ENCODE measurements at regions of chr2 and their contacts with region 1.

Region 1: DNA sequence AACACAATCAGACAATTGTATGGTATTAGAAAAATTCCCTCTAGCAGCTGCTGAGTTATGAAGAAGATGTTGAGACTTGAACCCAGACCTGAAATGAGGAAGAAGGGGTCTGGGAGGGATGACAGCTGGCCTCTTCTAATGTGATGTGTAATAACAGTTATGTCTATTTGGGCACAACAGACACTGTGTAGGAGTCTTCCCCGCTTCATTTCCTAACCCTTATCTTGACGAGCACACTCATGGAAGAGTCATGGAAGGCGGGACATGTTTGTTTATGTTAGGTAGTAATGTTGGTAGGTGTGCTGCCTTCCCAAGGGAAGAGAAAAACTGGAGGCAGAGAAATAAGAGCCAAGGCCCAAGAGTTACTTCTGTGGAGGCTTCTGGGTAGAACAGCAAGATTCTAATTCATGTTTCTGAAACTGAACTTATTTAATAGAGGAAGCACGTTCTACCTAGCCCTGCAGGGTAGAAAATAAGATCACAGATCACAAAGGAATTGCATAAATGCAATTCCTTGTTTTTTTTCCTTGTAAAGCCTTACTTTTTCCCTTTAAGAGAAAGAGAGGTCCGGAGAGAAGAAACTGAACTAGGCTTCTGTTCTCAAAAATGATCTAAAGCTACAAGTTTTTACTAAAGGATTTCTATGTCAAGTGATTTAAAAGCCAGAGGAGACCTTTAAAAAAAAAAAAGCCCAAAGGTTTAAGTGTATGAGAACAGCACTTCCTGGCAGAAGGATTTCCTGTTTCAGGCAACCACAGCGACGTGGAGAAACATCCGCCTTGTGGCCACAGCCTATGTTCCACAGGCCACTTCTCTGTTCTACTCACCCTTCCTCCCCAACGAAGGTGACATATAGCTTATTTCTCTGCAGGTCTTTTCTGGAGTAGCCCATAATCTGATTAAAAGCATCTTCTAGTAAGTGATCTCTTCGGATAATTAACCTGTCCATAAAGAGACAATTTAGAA is 68.5 kb upstream of the STK17B start:
- DNase-seq: peak; percentile 95
- H3K4me3 Mint-ChIP-seq: peak overlapping the region; percentile 68
- H3K27ac Mint-ChIP-seq: peak overlapping the region; percentile 99
- H3K4me1 Mint-ChIP-seq: peaks cover 72% of the 10 kb centered on the region
- H3K27me3 Mint-ChIP-seq: no peaks in the 10 kb centered on the region

Region 2: DNA sequence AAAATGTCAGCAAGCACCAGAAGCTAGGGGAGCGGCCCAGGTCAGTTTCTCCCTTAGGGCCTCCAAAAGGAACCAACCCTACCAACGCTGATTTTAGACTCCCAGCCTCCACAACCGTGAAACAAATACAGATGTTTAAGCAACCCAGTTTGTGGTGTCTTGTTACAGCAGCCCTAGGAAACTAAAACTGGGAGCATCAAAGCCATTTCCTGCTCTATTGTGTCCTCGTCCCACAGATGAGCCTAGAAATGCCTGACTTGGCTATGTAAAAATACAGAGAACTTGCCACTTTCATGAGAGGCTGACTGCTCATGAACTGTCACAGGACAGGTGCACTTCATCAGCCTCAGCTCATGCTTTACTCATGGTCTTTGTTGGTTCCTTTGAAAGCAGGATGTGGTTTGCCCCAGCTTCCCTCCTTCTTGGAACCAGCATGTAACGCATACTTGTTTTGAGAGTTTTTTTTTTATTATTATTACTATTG is 680.4 kb before region 1 on chr2:
- intact Hi-C with region 1: loop called (anchors 2 kb)
- DNase-seq: peak; percentile 95
- H3K4me3 Mint-ChIP-seq: peak overlapping the region; percentile 81
- H3K27ac Mint-ChIP-seq: peak overlapping the region; percentile 97
- H3K4me1 Mint-ChIP-seq: peaks cover 51% of the 10 kb centered on the region
- H3K27me3 Mint-ChIP-seq: no peaks in the 10 kb centered on the region

Region 3: DNA sequence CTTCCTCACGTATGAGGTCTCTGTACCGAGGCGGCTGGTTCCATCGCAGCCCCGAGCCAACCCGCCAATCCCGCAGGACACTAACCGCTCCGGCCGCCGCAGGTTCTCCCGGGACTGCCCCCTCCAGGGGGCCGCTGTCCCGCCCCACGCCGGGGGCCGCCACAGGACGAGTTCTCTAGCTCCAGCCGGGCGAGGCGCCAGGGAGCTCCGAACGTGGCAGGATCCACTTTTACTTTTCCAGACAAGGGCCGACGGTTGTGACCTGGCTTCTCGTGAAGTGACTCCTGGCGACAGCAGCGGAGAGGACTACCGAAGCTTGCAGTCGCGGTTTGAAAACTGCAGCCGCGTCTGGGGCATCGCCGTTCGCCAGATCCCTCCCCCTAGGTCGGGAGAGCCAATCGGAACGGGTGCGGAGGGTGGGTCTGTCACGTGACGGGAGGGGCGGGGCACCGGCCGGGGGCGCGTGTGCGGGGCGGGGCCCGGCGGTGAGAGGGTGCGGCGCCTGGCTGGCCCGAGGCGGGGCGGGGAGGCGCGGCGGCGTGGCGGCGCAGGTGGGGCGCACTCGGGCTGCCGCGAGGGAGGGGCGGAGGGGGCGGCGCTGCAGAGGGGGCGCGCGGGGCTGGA is 68.5 kb before region 1 on chr2 and contains the start of gene STK17B:
- intact Hi-C with region 1: loop called (anchors 1 kb)
- DNase-seq: peak; percentile 98
- H3K4me3 Mint-ChIP-seq: peak within 1 kb of the TSS; percentile 93
- H3K27ac Mint-ChIP-seq: peak within 1 kb of the TSS; percentile 99
- H3K4me1 Mint-ChIP-seq: peaks cover 40% of the 10 kb centered on the region
- H3K27me3 Mint-ChIP-seq: no peaks in the 10 kb centered on the region
- total RNA-seq, gene STK17B: 129 and 131 TPM in 2 replicates

Region 4: DNA sequence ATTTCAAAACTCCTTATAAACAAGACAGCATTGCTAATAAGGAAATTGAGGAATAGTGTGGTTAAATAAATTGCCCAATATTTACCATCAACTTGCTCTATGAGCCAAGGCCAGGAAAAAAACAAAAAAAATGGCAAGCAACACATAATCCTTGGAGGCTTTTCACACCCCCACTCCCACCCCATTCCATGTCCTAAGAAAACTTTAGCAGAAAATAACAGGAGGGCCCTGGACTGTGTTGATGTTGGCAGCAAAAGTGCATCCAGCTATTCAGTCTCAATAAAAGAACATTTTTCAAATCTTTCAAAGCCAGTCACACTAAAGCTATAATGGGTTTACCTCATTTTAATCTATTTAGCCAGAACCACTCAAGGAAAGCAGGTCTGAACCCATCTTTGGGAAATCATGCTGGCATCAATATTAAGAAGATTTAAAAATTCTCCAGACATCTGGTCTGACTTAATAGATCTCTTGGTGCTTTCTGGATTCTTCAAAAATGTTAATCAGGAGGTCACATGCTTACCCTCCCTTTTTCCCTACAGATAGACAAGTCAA is 33.9 kb before region 1 on chr2:
- intact Hi-C with region 1: loop called (anchors 1 kb)
- DNase-seq: no peak
- H3K4me3 Mint-ChIP-seq: no peak overlapping the region
- H3K27ac Mint-ChIP-seq: no peak overlapping the region
- H3K4me1 Mint-ChIP-seq: peaks cover 36% of the 10 kb centered on the region
- H3K27me3 Mint-ChIP-seq: no peaks in the 10 kb centered on the region

Region 5: DNA sequence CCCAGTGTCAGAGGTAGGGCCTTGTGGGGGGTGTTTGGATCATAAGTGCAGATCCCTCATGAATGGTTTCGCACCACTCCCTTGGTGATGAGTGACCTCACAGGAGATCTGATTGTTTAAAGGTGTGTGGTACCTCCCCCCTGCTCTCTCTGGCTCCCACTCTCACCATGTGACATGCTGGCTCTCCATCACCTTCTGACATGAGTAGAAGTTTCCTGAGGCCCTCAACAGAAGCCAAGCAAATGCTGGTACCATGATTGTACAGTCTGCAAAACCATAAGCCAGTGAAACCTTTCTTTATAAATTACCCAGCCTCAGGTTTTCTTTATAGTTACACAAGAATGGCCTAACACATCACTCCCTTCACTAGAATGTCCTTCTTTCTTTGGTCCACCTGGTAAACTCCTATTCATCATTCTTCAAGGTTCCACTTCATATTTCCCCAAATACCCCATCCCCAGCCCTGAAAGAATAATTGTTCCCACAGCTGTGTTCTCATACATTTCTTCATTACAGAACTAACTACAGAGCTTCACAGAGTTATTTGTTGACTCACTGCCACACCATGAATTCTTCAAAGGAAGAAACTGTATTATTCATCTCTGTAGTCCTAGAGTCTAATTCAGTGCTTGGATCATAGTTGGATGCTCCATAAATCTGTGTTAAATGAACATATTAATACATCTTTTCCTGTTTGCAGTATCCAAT is 12.7 kb after region 1 on chr2:
- intact Hi-C with region 1: loop called (anchors 1 kb)
- DNase-seq: no peak
- H3K4me3 Mint-ChIP-seq: peak overlapping the region; percentile 2
- H3K27ac Mint-ChIP-seq: peak overlapping the region; percentile 79
- H3K4me1 Mint-ChIP-seq: peaks cover 72% of the 10 kb centered on the region
- H3K27me3 Mint-ChIP-seq: no peaks in the 10 kb centered on the region

Region 6: GRCh38 chr2:196277002-196277401 is 37.1 kb after region 1 on chr2:
- intact Hi-C with region 1: loop called (anchors 1 kb)
- DNase-seq: peak; percentile 80
- H3K4me3 Mint-ChIP-seq: no peak overlapping the region
- H3K27ac Mint-ChIP-seq: no peak overlapping the region
- H3K4me1 Mint-ChIP-seq: peaks cover 48% of the 10 kb centered on the region
- H3K27me3 Mint-ChIP-seq: no peaks in the 10 kb centered on the region

Region 7: DNA sequence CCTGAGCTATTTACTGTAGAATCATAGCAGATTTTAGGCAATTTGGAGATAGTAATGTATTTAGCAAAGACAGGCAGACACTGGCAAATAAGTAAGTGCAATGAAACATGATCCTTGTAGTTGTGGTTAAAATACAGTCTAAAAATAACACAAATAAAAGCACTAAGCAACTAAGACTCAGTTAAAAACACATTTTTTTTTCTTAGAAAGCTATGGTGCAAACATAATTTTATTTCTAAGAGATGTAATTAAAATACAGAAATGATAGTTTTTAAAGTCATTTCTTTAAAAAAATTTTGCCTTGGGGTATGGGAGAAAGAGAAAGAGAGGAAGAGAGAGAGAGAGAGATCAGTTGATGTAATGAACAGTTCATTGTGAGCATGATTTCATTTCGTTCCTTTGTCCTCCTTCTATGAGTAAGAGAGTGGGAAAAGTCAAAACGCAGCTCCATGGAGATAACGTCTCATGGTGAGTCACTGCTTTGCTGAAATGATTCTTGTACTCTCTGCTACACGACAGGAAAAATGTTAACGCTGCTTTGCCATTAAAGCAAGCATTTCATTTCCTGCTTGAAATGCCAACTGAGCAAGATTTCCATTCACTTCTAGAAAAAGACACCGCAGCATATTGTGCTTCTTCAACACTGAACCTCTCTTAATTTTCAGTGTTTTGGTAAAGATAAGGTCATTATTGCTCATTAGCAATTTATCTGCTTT is 747.9 kb after region 1 on chr2:
- intact Hi-C with region 1: loop called (anchors 5 kb)
- DNase-seq: peak; percentile 82
- H3K4me3 Mint-ChIP-seq: peak overlapping the region; percentile 55
- H3K27ac Mint-ChIP-seq: peak overlapping the region; percentile 93
- H3K4me1 Mint-ChIP-seq: peaks cover 37% of the 10 kb centered on the region
- H3K27me3 Mint-ChIP-seq: no peaks in the 10 kb centered on the region

Measured in activated CD4-positive, alpha-beta T cell treated with anti-CD3 and anti-CD28 coated beads, Interleukin-2, amount 10 ng/mL, durations not matched to agents 24 days and 14 days (primary cell).